ENCODE measurements at regions of chr10 and their contacts with region 1.

Region 1: DNA sequence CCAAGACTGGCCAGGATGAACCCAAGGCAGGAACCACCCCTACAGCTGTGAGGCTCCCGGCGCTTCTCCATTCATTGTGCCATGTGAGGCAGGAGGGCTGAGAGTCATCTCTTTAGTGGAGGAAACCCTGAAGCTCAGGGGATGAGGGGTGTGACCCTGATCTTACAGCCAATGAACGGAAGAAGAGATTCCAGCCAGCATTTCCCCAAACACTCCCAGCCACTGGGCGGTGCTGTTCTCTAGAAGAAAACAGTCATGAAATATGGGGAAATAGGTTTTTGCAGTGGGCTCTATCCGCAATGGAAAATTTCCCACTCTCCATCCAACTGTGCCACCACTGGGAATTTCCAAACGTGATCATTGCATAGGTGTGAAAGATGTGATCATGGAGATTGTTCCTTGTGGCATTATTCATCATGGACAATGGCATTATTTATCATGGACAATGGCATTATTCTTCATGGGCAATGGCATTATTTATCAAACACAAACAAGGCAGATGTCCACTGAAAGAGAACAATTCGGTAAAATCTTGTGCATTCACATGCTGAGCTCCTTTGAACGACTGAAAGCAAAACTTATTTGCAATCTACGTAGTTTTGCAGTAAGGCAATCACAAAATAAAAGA is 14.0 kb upstream of the SLC18A2 start:
- DNase-seq: peak in 3 of 6 donors; percentile 29 to 56 (median 33)
- ATAC-seq: peak; percentile 61 to 85 (median 83)
- H3K4me3 ChIP-seq: no peak overlapping the region
- H3K27ac ChIP-seq: no peak overlapping the region
- H3K4me1 ChIP-seq: no peaks in the 10 kb centered on the region
- H3K27me3 ChIP-seq: no peaks in the 10 kb centered on the region
- CTCF ChIP-seq: peak; percentile 21 to 44 (median 34)

Region 2: GRCh38 chr10:117320050-117320665 is 93.2 kb after region 1 on chr10:
- intact Hi-C with region 1: loop called in 2 of 3 experiments (anchors 10 kb)
- DNase-seq: no peak
- ATAC-seq: peak; percentile 36 to 83 (median 81)
- H3K4me3 ChIP-seq: no peak overlapping the region
- H3K27ac ChIP-seq: no peak overlapping the region
- H3K4me1 ChIP-seq: peaks cover 0 to 4% (median 0%) of the 10 kb centered on the region in 3 donors
- H3K27me3 ChIP-seq: no peaks in the 10 kb centered on the region
- CTCF ChIP-seq: peak in 3 of 4 donors; percentile 30 to 50 (median 41)

Region 3: DNA sequence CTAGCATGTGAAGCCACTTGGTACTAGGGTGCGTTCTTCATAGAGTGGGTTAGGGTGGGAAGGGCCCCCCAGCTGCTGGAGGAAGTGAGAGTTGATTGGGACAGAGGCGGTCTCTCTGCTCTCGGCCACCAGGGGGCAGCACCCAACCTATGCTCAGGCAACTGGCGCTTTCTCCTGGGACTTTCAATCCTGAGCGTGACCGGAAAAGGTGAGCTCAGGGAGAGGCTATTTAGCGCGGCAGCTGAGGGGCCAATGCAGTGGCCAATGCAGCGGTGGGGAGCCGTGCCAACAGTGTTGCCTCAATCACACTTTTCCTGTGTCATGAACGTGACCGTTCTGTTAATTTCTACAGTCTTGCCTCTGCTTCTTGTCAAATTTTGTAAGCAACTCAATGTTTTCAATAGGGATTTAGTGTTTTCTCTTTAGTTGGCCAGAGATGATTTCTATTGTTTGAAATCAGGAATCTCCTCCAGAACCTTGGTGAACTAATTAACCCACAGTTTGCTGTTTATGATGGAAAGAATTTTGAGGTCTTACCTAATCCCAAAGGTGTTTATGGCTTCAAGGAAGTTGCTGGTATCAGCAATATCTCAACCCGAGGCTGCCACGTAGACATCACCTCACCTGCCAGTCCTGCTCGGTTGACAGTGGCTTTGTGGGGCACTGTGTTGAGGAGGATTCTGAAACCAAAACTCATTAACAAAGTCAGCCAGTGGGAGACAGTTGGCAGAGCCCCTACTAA is 216.2 kb after region 1 on chr10:
- intact Hi-C with region 1: loop called in 1 of 3 experiments (anchors 10 kb)
- DNase-seq: peak; percentile 69 to 95 (median 86)
- ATAC-seq: peak; percentile 94 to 99 (median 96)
- H3K4me3 ChIP-seq: peak overlapping the region in 2 of 4 donors; percentile 13 to 26
- H3K27ac ChIP-seq: no peak overlapping the region
- H3K4me1 ChIP-seq: no peaks in the 10 kb centered on the region
- H3K27me3 ChIP-seq: no peaks in the 10 kb centered on the region
- CTCF ChIP-seq: peak; percentile 87 to 94 (median 92)

Region 4: DNA sequence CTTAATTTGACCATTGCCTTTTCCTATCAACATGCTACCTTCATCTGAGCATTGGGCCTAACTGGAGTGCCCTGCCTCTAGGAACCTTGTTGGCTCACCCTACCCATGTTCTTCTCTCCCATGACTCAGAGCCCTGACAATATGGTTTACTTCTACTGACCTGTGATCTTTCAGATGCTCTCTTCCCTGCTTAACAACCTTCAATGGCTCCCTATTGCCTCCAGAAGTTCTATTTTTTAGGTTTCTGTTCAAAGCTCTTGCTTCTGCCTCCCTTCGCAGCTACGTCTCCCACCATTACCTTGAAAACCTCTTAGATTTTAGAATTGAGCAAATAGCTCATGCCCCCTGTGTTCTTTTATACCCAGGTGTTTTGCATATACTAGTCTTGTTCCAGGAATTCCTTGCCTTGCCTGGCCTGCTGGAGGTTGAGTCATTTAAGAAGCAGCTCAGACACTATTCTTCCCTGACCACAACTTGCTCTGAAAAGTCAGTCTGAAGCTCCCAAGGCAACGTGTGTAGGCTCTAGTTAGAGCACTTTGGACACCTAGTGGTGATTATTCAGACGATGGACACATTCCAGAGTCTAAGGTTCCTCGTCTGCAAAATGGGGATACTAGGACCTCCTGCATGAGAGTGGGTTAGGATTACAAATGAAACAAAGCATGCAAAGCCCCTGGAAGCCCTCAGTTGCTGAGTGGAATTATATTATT is 251.2 kb after region 1 on chr10:
- intact Hi-C with region 1: loop called in 1 of 3 experiments (anchors 10 kb)
- DNase-seq: no peak
- ATAC-seq: peak in 3 of 4 donors; percentile 52 to 73 (median 53)
- H3K4me3 ChIP-seq: no peak overlapping the region
- H3K27ac ChIP-seq: no peak overlapping the region
- H3K4me1 ChIP-seq: no peaks in the 10 kb centered on the region
- H3K27me3 ChIP-seq: no peaks in the 10 kb centered on the region
- CTCF ChIP-seq: no peak

Measured in pancreas (tissue), 10 donors.